HEK293 (cell line): ENCODE measurements at regions of chr19 and their contacts with region 1.

Region 1: GRCh38 chr19:36152352-36153091 is at the start of gene COX7A1:
- H3K4me3 ChIP-seq: no peak within 1 kb of the TSS
- H3K27ac ChIP-seq: no peak within 1 kb of the TSS
- H3K4me1 ChIP-seq: peaks cover 4% of the 10 kb centered on the region; the same call in 1 of the 2 replicates
- CTCF ChIP-seq: no peak

Region 2: GRCh38 chr19:36139473-36140303 is 12.8 kb before region 1 on chr19 and contains the start of gene CAPNS1:
- CTCF ChIA-PET with region 1: interaction called, 3 read pairs
- POLR2A ChIA-PET with region 1: interaction called, 10 read pairs
- H3K4me3 ChIP-seq: peak within 1 kb of the TSS; percentile 80
- H3K27ac ChIP-seq: peak within 1 kb of the TSS; percentile 94
- H3K4me1 ChIP-seq: peaks cover 14% of the 10 kb centered on the region
- CTCF ChIP-seq: peak; percentile 94